A549 (cell line): ENCODE measurements at regions of chr11 and their contacts with region 1.

Region 1: DNA sequence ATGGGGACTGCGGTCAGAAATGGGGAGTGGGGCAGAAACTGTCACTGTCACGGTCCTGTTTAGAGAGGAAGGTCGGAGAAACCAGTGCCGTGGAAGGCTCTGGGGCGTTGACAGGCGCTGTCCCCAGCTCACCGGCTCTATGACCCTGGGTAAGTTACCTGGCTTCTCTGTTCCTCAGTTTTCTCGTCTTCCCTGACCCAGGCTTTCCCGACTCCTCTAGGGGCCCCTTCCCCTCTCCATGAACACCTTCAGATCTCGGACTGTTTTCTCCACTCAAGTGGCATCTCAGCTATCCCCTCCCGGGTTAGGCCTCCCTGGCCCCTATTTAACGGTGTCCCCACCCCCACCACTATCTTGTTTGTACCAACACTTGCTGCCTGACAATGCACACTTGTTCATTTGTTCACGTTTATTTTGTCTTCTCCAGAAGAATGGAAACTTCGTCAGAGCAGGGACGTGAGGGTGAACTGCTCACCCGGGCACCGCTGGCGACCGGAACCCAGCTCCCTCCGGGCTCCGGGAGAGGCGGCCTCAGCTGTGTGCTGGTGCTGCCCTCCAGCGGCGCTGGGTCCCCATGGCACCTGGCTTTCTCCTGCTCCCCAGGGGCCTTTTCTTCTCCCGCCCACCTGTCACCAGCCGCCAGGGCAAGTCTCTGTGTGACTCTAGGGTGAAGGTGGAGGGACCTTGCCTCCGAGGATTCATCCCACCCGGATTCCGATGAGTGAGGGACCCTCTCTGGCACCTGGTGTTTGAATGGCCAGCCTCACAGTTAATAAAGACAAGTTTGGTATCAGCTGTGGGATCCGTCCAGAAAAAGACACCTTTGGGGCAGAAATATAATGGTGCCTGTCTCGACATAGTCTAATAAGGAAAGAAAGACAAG is 33.1 kb upstream of the SLC35C1 start:
- DNase-seq: peak; percentile 74 to 96
- ATAC-seq: peak; percentile 95 to 98
- H3K4me3 ChIP-seq: peak overlapping the region; percentile 52
- H3K27ac ChIP-seq: peak overlapping the region; percentile 8 to 36; a peak in 1 of 6 replicates
- H3K4me1 ChIP-seq: no peaks in the 10 kb centered on the region
- CTCF ChIP-seq: peak; percentile 87
- EP300 ChIP-seq: no peak
- POLR2A ChIP-seq: no peak
- RAD21 ChIP-seq: peak; percentile 89 to 95

Region 2: GRCh38 chr11:45371251-45372115 is 400.3 kb before region 1 on chr11:
- CTCF ChIA-PET with region 1: interaction called, 97 read pairs
- POLR2A ChIA-PET with region 1: interaction called, 7 read pairs
- DNase-seq: peak; percentile 68 to 84
- ATAC-seq: peak; percentile 60 to 92
- H3K4me3 ChIP-seq: no peak overlapping the region
- H3K27ac ChIP-seq: no peak overlapping the region
- H3K4me1 ChIP-seq: no peaks in the 10 kb centered on the region
- CTCF ChIP-seq: peak; percentile 82
- EP300 ChIP-seq: no peak
- POLR2A ChIP-seq: no peak
- RAD21 ChIP-seq: peak; percentile 77 to 91

Region 3: DNA sequence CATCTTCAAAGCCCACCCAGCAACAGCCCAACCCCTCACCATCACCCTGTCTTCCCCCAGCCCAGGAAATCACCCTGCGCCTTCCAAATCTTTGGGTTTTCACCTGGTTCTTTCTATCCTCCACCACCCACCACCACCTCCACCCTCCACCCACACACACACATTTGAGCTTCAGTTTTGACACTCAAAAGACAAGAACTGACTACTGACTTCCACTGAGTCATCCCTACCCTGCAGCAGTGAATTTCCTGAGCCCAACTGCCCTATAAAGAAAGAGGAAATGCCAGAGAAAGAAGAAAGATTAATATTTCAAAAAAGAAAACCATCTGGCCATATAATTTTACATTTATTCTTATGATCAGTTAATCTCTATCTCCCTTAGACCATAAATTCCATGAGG is 243.9 kb before region 1 on chr11:
- CTCF ChIA-PET with region 1: interaction called, 10 read pairs
- POLR2A ChIA-PET with region 1: no interaction called
- DNase-seq: no peak
- ATAC-seq: no peak
- H3K4me3 ChIP-seq: no peak overlapping the region
- H3K27ac ChIP-seq: no peak overlapping the region
- H3K4me1 ChIP-seq: no peaks in the 10 kb centered on the region
- CTCF ChIP-seq: no peak
- EP300 ChIP-seq: no peak
- POLR2A ChIP-seq: no peak
- RAD21 ChIP-seq: no peak

Region 4: DNA sequence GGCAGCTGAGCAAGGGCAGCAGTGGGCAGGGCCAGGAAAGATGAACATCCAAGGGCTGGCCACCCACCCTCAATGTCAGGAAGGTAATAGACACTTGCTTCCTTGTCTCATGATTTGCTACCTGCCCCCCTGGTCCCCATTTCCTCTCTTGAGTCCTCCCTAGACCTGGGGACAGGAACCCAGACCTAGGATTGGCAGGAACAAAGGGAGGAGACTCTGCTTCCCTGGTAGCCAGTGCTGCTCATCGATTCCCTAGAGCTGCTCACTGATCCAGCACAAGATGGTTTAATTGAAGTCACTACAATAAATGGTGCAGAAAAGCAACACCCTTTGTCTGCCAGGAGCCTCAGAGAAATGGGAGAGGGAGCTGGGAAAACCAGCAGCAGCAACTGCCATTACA is 38.6 kb before region 1 on chr11:
- CTCF ChIA-PET with region 1: interaction called, 11 read pairs
- POLR2A ChIA-PET with region 1: no interaction called
- DNase-seq: no peak
- ATAC-seq: no peak
- H3K4me3 ChIP-seq: no peak overlapping the region
- H3K27ac ChIP-seq: no peak overlapping the region
- H3K4me1 ChIP-seq: peaks cover 8% of the 10 kb centered on the region; the same call in 2 of the 3 replicates
- CTCF ChIP-seq: no peak
- EP300 ChIP-seq: no peak
- POLR2A ChIP-seq: no peak
- RAD21 ChIP-seq: no peak

Region 5: GRCh38 chr11:45786272-45786671 is 14.5 kb after region 1 on chr11:
- CTCF ChIA-PET with region 1: interaction called, 18 read pairs
- POLR2A ChIA-PET with region 1: no interaction called
- DNase-seq: no peak
- ATAC-seq: no peak
- H3K4me3 ChIP-seq: no peak overlapping the region
- H3K27ac ChIP-seq: no peak overlapping the region
- H3K4me1 ChIP-seq: no peaks in the 10 kb centered on the region
- CTCF ChIP-seq: no peak
- EP300 ChIP-seq: no peak
- POLR2A ChIP-seq: no peak
- RAD21 ChIP-seq: no peak